ENCODE measurements at regions of chr18 and their contacts with region 1.

Region 1: DNA sequence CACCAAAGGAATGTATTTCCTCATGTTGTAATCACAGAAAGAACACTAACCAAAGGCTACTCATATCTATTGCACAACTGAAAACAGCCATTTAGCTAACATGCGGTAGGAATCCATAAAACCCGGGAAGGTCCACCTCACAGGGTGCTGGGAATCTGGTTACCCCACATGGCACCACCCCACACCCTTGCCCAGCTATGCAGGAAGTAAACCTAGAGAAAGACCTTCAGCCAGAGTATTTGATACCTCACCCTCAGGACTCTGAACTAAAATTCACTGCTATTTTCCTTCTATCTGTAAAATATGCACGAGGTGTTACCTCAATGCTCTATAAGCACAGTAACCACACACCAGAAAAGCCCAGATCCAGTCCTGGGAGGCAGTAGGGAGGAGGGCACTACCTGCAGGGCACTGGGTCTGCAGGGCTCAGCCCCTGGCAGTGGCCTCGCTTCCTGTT is 45.8 kb downstream of the PTPN2 start:
- DNase-seq: peak; percentile 16
- H3K4me3 Mint-ChIP-seq: peak overlapping the region; percentile 78
- H3K27ac Mint-ChIP-seq: peak overlapping the region; percentile 92
- H3K4me1 Mint-ChIP-seq: peaks cover 78% of the 10 kb centered on the region
- H3K27me3 Mint-ChIP-seq: no peaks in the 10 kb centered on the region

Region 2: GRCh38 chr18:12776821-12777471 is 61.3 kb before region 1 on chr18:
- intact Hi-C with region 1: loop called (anchors 2 kb)
- DNase-seq: no peak
- H3K4me3 Mint-ChIP-seq: no peak overlapping the region
- H3K27ac Mint-ChIP-seq: no peak overlapping the region
- H3K4me1 Mint-ChIP-seq: peaks cover 12% of the 10 kb centered on the region
- H3K27me3 Mint-ChIP-seq: no peaks in the 10 kb centered on the region

Region 3: GRCh38 chr18:12819322-12819721 is 18.9 kb before region 1 on chr18:
- intact Hi-C with region 1: loop called (anchors 1 kb)
- DNase-seq: peak; percentile 38
- H3K4me3 Mint-ChIP-seq: peak overlapping the region; percentile 35
- H3K27ac Mint-ChIP-seq: peak overlapping the region; percentile 35
- H3K4me1 Mint-ChIP-seq: peaks cover 62% of the 10 kb centered on the region
- H3K27me3 Mint-ChIP-seq: no peaks in the 10 kb centered on the region

Region 4: GRCh38 chr18:12851716-12852115 is 13.5 kb after region 1 on chr18:
- intact Hi-C with region 1: no loop called
- DNase-seq: no peak
- H3K4me3 Mint-ChIP-seq: no peak overlapping the region
- H3K27ac Mint-ChIP-seq: no peak overlapping the region
- H3K4me1 Mint-ChIP-seq: peaks cover 67% of the 10 kb centered on the region
- H3K27me3 Mint-ChIP-seq: no peaks in the 10 kb centered on the region

Region 5: GRCh38 chr18:12883684-12884405 is 45.6 kb after region 1 on chr18 and contains the start of gene PTPN2:
- intact Hi-C with region 1: loop called (anchors 1 kb)
- DNase-seq: peak; percentile 89
- H3K4me3 Mint-ChIP-seq: peak within 1 kb of the TSS; percentile 92
- H3K27ac Mint-ChIP-seq: peak within 1 kb of the TSS; percentile 92
- H3K4me1 Mint-ChIP-seq: peaks cover 70% of the 10 kb centered on the region
- H3K27me3 Mint-ChIP-seq: no peaks in the 10 kb centered on the region
- total RNA-seq, gene PTPN2: 76.7 and 77.1 TPM in 2 replicates

Region 6: DNA sequence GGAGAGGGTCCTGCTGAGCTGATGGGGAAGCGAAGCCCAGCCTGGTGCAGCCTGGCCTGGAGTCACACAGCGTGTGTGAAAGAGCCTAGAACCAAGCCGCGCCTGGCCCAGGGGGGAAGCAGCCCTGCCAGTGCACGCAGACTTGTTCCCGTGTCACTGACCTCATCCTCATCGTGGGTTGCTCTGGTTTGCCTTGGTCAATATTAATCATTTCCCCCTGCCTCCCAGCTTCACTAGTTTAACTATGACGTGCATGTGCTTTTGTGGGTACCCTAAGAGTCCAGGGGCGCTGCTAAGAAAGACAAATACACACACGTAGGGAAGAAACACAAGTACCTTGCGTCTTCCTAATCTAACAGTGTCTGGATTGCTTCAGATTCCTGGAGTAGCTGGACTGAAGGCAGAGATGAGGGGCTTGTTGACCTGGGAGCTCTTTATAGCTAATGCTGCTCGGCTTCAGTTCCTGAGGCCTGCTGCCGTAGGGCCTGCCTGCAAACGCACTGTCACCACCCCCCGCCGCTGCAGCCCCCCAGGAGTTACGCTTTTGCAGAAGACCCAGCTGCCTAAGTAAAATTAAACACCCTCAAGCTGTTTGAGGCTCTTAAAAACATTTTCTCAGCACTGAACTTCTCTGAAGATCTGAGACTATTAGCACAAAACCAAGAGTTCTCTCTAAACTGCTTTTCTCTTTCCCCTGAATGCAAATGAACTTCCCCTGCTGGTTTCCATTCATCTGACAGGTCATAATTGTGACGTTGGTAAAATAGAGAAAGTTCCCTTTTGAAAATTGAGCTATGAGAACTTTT is 728.9 kb after region 1 on chr18:
- intact Hi-C with region 1: loop called (anchors 10 kb)
- DNase-seq: no peak
- H3K4me3 Mint-ChIP-seq: peak overlapping the region; percentile 61
- H3K27ac Mint-ChIP-seq: peak overlapping the region; percentile 87
- H3K4me1 Mint-ChIP-seq: peaks cover 72% of the 10 kb centered on the region
- H3K27me3 Mint-ChIP-seq: no peaks in the 10 kb centered on the region

Measured in activated T-helper 1 cell treated with anti-CD3 and anti-CD28 coated beads, Interleukin-12 subunit alpha, Interleukin-12 subunit beta, Interleukin-2, Interleukin-4 antibody, amounts not matched to agents 30 ng/mL and 10 ng/mL and 1 ng/mL, durations not matched to agents 14 hours and 24 hours and 36 hours (primary cell).